Dendritic cell treated with granulocyte-macrophage colony-stimulating factor and Interleukin-4, amounts not matched to agents 40 ng/mL and 50 ng/mL, for 4 days (primary cell): ENCODE measurements at regions of chr1 and their contacts with region 1.

Region 1: GRCh38 chr1:111733183-111733991 is 5.8 kb downstream of the INKA2 start:
- H3K4me3 Mint-ChIP-seq: no peak overlapping the region
- H3K27ac Mint-ChIP-seq: no peak overlapping the region
- H3K4me1 Mint-ChIP-seq: peaks cover 11% of the 10 kb centered on the region
- H3K27me3 Mint-ChIP-seq: peaks cover 8% of the 10 kb centered on the region

Region 2: DNA sequence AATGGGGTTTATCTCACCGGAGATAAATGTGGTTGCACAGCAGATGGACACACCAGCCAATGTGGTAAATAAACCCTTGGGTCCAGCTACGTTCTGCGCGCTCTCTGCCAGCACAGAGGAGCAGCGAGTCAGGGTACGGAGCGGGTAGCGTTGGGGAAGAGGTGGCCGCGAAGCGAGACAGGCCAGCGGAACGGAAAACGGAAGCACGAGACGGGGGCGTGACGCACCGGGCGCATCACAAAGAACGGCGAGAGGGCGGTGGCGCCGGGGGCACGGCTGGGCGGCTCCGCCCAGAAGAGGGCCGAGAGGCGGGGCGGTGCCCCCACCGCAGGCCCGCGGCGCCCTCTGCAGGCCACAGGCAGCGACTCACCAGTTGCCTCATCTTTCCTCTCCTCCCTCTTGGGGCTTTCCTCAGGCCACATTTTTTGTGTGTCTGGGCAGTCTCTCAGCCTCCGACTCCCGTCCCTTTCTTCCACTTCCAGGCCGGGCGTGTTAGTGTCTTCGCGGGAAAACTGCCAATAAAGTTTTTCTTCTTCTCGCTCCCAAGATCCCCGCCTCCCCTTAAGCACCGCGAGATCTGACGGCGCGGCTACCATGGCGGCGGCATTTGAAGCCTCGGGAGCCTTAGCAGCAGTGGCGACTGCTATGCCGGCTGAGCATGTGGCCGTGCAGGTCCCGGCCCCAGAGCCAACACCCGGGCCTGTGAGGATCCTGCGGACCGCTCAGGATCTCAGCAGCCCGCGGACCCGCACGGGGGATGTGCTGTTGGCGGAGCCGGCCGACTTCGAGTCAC is 22.1 kb after region 1 on chr1 and contains the start of gene DDX20:
- intact Hi-C with region 1: loop called (anchors 1 kb)
- H3K4me3 Mint-ChIP-seq: peak within 1 kb of the TSS; percentile 95
- H3K27ac Mint-ChIP-seq: peak within 1 kb of the TSS; percentile 94
- H3K4me1 Mint-ChIP-seq: peaks cover 41% of the 10 kb centered on the region
- H3K27me3 Mint-ChIP-seq: no peaks in the 10 kb centered on the region